ENCODE measurements at regions of chr9 and their contacts with region 1.

Region 1: GRCh38 chr9:129006328-129007034 is 21.6 kb downstream of the SH3GLB2 start:
- H3K4me3 ChIP-seq: no peak overlapping the region
- H3K27ac ChIP-seq: no peak overlapping the region
- H3K4me1 ChIP-seq: no peaks in the 10 kb centered on the region
- CTCF ChIP-seq: peak; percentile 92

Region 2: DNA sequence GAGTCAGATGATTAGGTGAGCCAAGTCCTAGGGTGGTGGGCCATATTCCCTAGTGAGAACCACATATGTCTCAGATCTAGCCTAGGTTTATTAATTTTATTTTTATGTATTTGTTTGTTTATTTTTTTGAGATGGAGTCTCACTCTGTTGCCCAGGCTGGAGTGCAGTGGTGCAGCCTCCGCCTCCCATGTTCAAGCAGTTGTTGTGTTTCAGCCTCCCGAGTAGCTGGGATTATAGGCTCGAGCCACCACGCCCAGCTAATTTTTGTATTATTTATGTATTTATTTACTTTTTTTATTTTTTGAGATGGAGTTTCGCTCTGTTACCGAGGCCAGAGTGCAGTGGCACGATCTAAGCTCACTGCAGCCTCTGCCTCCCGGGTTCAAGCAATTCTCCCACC is 22.9 kb before region 1 on chr9:
- CTCF ChIA-PET with region 1: interaction called, 13 read pairs
- POLR2A ChIA-PET with region 1: interaction called, 3 read pairs
- H3K4me3 ChIP-seq: no peak overlapping the region
- H3K27ac ChIP-seq: no peak overlapping the region
- H3K4me1 ChIP-seq: no peaks in the 10 kb centered on the region
- CTCF ChIP-seq: no peak

Region 3: DNA sequence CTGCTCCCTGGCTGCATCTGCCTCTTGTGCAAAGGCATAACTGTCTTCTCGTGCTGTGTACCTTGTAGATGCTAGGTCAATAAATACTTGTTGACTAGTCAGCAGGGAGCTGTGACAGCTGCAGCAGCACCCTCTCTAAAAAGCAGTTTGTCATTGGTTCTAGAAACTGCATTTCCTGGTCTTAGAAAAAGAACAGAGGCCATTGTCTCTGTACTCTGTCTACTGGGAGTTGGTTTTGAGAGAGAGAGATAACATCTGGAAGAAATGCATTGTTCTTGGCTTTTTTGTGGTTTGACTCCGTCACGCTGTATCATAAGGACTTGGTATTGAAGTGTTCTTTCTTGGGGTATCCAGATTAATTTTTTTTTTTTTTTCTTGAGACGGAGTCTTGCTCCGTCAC is 10.7 kb before region 1 on chr9:
- CTCF ChIA-PET with region 1: interaction called, 20 read pairs
- POLR2A ChIA-PET with region 1: interaction called, 3 read pairs
- H3K4me3 ChIP-seq: no peak overlapping the region
- H3K27ac ChIP-seq: no peak overlapping the region
- H3K4me1 ChIP-seq: no peaks in the 10 kb centered on the region
- CTCF ChIP-seq: no peak

Region 4: DNA sequence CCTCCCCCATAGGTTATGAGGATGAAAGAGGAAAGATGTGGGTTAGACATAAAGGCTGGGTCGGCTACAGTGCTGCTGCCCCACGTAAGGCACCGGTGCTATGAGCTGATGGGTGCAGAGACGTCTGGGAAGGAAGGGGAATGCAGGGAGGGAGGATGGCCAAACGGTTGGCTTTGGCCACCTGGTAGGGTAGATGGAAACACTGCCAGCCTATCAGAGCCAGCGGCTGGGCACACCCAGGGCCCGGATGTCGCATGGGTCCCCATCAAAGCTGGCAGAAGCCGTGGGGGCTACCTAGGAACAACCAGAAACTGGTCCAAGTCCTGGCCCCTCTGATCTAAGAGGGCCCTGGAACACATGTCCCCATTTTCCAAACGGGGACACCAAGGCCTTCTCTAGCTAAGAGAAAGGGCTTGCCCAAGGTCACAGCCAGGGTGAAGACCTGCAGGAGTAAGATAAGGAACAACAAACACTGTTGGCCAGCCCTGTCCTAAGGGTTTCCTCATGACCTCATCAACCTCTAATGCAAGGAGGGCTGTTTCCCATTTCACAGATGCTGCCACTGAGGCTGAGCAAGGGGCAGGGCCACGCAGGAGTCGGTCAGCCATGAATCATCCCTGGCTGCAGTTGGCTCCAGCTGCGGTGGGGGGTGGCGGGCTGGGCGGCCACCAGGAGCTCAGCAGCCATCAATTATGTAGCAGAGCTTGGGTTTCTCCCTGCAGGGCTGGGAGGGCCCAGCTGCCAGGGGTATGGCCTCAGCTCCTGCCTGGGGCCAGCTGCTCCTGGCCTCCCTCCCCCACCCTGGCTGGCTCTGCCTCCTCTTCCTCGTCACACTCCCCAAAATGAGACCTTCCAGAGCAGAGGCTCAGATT is 16.8 kb after region 1 on chr9:
- CTCF ChIA-PET with region 1: interaction called, 31 read pairs
- POLR2A ChIA-PET with region 1: interaction called, 10 read pairs
- H3K4me3 ChIP-seq: no peak overlapping the region
- H3K27ac ChIP-seq: no peak overlapping the region
- H3K4me1 ChIP-seq: no peaks in the 10 kb centered on the region
- CTCF ChIP-seq: no peak

Region 5: DNA sequence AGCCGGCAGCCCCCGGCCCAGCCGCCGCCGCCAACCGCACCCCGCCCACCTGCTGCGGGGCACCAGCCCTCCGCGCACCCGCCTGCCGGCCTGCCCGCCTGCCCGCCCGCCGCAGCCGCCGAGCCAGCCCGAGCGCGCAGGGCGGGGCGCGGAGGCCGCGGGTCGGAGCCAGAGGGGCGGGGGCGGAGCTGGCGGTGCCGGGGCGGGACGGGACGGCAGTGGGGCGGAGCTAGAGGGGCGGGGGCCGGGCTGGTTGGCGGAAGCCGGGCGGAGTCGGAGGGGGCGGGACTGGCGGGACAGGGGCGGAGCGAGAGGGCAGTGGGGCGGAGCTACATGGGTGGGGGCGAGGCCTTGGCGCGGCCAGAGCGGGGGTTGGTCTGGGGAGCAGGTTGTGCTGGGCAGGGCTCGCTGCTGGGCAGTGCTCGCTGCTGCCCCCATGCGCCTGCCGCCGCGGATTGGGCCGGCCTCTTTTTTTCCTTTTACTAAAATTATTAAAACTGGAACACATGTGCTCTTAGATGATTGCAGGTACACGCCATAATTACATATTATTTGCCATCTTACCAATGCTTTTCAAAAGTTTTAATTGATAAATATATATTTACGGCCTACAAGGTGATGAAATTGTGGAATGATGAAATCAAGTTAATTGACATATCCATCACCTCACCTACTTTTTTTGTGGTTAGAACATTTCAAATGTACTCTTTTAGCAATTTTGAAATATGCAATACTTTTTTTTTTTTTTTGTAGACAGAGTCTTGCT is 21.9 kb after region 1 on chr9 and contains the start of gene SH3GLB2:
- CTCF ChIA-PET with region 1: interaction called, 31 read pairs
- POLR2A ChIA-PET with region 1: interaction called, 10 read pairs
- H3K4me3 ChIP-seq: peak within 1 kb of the TSS; percentile 74
- H3K27ac ChIP-seq: peak within 1 kb of the TSS; percentile 67; the same call in 1 of the 2 replicates
- H3K4me1 ChIP-seq: no peaks in the 10 kb centered on the region
- CTCF ChIP-seq: peak; percentile 78

Region 6: GRCh38 chr9:129036241-129036922 is 29.9 kb after region 1 on chr9 and contains the start of gene MIGA2:
- CTCF ChIA-PET with region 1: interaction called, 17 read pairs
- POLR2A ChIA-PET with region 1: interaction called, 4 read pairs
- H3K4me3 ChIP-seq: peak within 1 kb of the TSS; percentile 77
- H3K27ac ChIP-seq: peak within 1 kb of the TSS; percentile 62
- H3K4me1 ChIP-seq: no peaks in the 10 kb centered on the region
- CTCF ChIP-seq: no peak; the same call in 1 of the 2 replicates

Region 7: GRCh38 chr9:129064499-129064908 is 58.0 kb after region 1 on chr9:
- CTCF ChIA-PET with region 1: no interaction called
- POLR2A ChIA-PET with region 1: no interaction called
- H3K4me3 ChIP-seq: no peak overlapping the region
- H3K27ac ChIP-seq: no peak overlapping the region
- H3K4me1 ChIP-seq: no peaks in the 10 kb centered on the region
- CTCF ChIP-seq: no peak

Measured in HEK293 (cell line).